ENCODE measurements at regions of chr9 and their contacts with region 1.

Region 1: GRCh38 chr9:27499481-27499880 is 24.6 kb upstream of the IFNK start:
- DNase-seq: no peak
- H3K4me3 Mint-ChIP-seq: no peak overlapping the region
- H3K27ac Mint-ChIP-seq: peak overlapping the region; percentile 59
- H3K4me1 Mint-ChIP-seq: peaks cover 41% of the 10 kb centered on the region
- H3K27me3 Mint-ChIP-seq: peaks cover 1% of the 10 kb centered on the region

Region 2: GRCh38 chr9:27407986-27408385 is 91.5 kb before region 1 on chr9:
- CTCF ChIA-PET with region 1: no interaction called
- intact Hi-C with region 1: no loop called
- DNase-seq: no peak
- H3K4me3 Mint-ChIP-seq: no peak overlapping the region
- H3K27ac Mint-ChIP-seq: no peak overlapping the region
- H3K4me1 Mint-ChIP-seq: no peaks in the 10 kb centered on the region
- H3K27me3 Mint-ChIP-seq: no peaks in the 10 kb centered on the region

Region 3: DNA sequence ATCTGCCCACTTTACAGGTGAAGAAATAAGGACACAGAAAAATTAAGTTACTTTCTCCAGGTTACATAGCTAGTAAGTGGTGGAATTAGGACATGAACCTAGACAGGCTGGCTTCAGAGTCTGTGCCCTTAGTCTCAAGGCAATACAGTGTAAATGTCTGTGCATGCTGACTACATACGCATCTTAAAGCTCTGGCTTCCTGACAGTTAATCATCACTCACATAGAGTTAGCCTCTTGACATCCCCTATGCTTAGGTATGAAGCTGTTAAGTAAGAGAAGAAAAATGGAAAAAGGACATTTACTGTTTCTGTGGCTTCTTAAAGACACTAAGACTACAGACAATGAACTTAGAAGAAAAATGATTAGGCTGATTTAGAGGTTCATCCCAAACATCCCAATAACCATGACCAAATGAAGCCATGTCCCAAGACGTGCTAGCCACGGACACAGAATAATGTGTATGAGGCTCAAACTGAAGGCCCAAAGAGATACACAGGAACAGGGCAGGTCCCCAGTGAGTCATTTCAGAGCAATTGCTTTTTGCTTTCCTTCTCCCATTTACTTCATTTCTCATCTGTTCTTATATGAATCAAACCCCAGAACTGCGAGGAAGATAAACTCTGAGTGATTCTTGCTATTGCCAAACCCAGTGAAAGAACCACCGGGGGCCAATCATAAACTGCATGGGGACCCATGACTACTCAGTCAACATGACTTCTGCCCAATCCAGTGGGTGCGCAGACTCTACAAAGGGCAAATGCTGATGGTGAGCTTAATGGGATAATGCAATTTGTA is 75.4 kb before region 1 on chr9:
- CTCF ChIA-PET with region 1: no interaction called
- intact Hi-C with region 1: loop called (anchors 2 kb)
- DNase-seq: peak; percentile 51
- H3K4me3 Mint-ChIP-seq: no peak overlapping the region
- H3K27ac Mint-ChIP-seq: peak overlapping the region; percentile 11
- H3K4me1 Mint-ChIP-seq: peaks cover 8% of the 10 kb centered on the region
- H3K27me3 Mint-ChIP-seq: no peaks in the 10 kb centered on the region

Region 4: GRCh38 chr9:27441741-27442070 is 57.8 kb before region 1 on chr9:
- CTCF ChIA-PET with region 1: no interaction called
- intact Hi-C with region 1: no loop called
- DNase-seq: no peak
- H3K4me3 Mint-ChIP-seq: no peak overlapping the region
- H3K27ac Mint-ChIP-seq: no peak overlapping the region
- H3K4me1 Mint-ChIP-seq: peaks cover 11% of the 10 kb centered on the region
- H3K27me3 Mint-ChIP-seq: no peaks in the 10 kb centered on the region

Region 5: DNA sequence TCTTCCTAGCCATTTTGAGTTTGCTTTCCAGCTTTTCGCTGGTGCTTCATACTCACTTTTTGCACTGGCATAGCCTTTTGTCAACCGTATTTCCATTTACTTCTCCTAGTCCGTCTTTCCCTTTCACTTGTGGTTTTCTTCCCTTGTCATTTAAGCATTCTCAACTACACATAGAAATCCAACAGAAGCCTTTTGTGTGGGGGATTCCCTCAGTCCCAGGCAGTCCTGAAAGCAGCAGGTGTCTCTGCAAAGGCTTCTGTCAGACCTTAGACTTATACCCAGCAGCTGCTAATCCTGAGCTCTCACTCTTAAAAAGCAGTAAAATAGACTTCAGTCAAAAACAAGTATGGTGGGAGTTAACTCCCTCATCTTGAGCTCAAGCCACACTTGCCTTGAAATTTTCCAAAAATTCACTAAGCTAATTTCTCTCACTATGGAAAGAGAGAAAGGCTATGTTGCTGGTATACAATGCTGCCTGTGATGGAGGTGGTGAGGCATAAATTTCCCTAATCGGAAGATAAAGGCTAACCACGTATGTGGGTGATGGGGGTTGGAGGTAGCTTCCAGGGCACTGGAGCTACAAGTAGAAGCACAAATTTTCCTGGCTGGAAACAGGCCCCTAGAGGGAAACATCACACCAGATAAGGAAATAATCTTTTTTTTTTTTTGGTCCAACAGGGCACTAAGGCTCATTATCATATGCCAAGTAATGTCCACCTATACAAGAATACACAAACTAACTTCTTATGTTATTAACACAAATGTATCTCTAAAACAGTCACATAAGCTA is 10.2 kb before region 1 on chr9:
- CTCF ChIA-PET with region 1: no interaction called
- intact Hi-C with region 1: loop called (anchors 1 kb)
- DNase-seq: peak; percentile 20
- H3K4me3 Mint-ChIP-seq: no peak overlapping the region
- H3K27ac Mint-ChIP-seq: no peak overlapping the region
- H3K4me1 Mint-ChIP-seq: peaks cover 25% of the 10 kb centered on the region
- H3K27me3 Mint-ChIP-seq: no peaks in the 10 kb centered on the region

Region 6: GRCh38 chr9:27524236-27524635 is 24.8 kb after region 1 on chr9 and contains the start of gene IFNK:
- CTCF ChIA-PET with region 1: no interaction called
- intact Hi-C with region 1: loop called (anchors 1 kb)
- DNase-seq: no peak
- H3K4me3 Mint-ChIP-seq: no peak within 1 kb of the TSS
- H3K27ac Mint-ChIP-seq: peak within 1 kb of the TSS; percentile 57
- H3K4me1 Mint-ChIP-seq: peaks cover 14% of the 10 kb centered on the region
- H3K27me3 Mint-ChIP-seq: peaks cover 8% of the 10 kb centered on the region
- total RNA-seq, gene IFNK: 0.24 TPM in 1 of 2 experiments, not detected in the other

Measured in activated naive CD4-positive, alpha-beta T cell treated with anti-CD3 and anti-CD28 coated beads for 36 hours (primary cell).